ENCODE measurements at regions of chr2 and their contacts with region 1.

Region 1: GRCh38 chr2:227774011-227774624 is 28.4 kb downstream of the SCYGR8 start:
- DNase-seq: peak in 1 of 2 experiments; percentile 49
- H3K4me3 ChIP-seq: no peak overlapping the region
- H3K27ac ChIP-seq: no peak overlapping the region
- H3K4me1 ChIP-seq: peaks cover 1 to 8% (median 3%) of the 10 kb centered on the region in 4 experiments; a peak in 3 of 7 replicates
- H3K27me3 ChIP-seq: no peaks in the 10 kb centered on the region
- CTCF ChIP-seq: peak; percentile 36 to 66 (median 56)
- EP300 ChIP-seq: no peak
- POLR2A ChIP-seq: no peak
- RAD21 ChIP-seq: peak; percentile 50 to 56

Region 2: GRCh38 chr2:227793148-227793712 is 19.1 kb after region 1 on chr2:
- CTCF ChIA-PET with region 1: interaction called, 17 read pairs
- POLR2A ChIA-PET with region 1: interaction called, 3 read pairs
- DNase-seq: no peak
- H3K4me3 ChIP-seq: no peak overlapping the region
- H3K27ac ChIP-seq: no peak overlapping the region
- H3K4me1 ChIP-seq: no peaks in the 10 kb centered on the region
- H3K27me3 ChIP-seq: peaks cover 0 to 1% (median 0%) of the 10 kb centered on the region in 4 experiments; a peak in 1 of 7 replicates
- CTCF ChIP-seq: no peak
- EP300 ChIP-seq: no peak
- POLR2A ChIP-seq: no peak
- RAD21 ChIP-seq: no peak

Region 3: DNA sequence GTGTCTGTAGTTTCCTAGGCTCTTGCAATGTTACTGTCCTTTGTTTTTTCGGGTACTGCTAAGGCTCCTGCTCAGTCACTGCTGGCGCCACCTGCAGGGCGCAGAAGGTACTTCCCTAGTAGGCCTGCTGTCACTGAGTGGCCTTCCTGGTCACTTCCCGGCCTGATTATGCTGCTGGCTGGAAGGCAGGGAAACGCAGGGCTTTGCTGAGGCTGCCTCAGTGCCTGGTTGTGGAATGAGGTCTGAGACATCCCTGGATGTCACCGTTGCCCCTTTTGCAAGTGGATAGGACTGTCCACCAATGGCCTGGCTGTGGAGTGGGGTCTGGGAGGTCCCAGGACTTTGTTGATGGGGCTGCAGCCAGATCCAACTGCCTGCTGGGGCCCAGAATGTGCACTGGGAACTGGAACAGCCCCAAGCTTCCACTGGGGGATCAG is 110.4 kb after region 1 on chr2:
- CTCF ChIA-PET with region 1: no interaction called
- POLR2A ChIA-PET with region 1: no interaction called
- DNase-seq: peak; percentile 84 to 93
- H3K4me3 ChIP-seq: no peak overlapping the region
- H3K27ac ChIP-seq: no peak overlapping the region
- H3K4me1 ChIP-seq: no peaks in the 10 kb centered on the region
- H3K27me3 ChIP-seq: no peaks in the 10 kb centered on the region
- CTCF ChIP-seq: peak; percentile 94 to 98 (median 97)
- EP300 ChIP-seq: no peak
- POLR2A ChIP-seq: no peak
- RAD21 ChIP-seq: peak; percentile 67 to 78

Measured in H1 (cell line).